CD8-positive, alpha-beta T cell (primary cell): ENCODE measurements at regions of chr3 and their contacts with region 1.

Region 1: DNA sequence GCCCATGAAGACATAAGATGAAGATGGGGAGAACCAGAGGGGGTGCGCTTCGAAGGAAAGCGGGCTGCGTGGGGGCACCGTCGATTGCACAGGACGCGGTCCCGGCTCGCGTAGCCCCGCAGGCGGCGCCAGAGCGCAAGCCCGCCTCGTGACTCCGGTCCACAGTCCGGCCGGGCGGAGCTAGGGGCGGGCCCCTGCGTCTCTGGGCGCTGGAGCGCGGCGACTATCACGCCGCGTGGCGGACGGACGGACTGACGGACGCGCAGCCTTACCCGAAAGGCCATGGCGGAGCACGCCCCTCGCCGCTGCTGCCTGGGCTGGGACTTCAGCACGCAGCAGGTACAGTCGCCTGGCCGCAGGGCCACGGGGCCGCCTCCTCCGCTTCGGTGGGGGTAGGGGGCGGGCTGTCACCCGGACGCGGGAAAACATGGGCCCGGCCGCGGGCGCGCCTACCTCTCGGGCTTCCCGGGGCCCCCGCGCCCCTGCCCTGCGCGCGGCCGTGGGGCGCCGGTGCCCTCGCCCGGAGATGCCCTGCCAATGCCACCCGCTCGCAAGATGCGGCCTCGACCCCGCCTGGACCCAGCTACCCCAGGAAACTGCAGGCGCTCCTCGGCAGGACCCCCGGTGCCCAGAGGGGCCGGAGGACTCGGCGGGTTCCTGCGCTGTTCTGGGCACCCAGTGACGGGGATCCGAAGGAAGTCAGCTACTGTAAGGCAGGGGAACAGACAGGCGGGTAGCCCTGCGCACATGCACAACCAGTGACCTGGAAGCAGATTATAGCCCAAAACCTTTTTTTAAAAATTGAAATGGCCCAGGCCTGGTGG is at the start of gene XYLB:
- DNase-seq: peak; percentile 43 to 87 (median 71)
- ATAC-seq: peak; percentile 95
- H3K4me3 ChIP-seq: peak within 1 kb of the TSS; percentile 51 to 83
- H3K4me3 Mint-ChIP-seq: peak within 1 kb of the TSS; percentile 85
- H3K27ac ChIP-seq: peak within 1 kb of the TSS in 1 of 2 experiments; percentile 33
- H3K27ac Mint-ChIP-seq: no peak within 1 kb of the TSS
- H3K4me1 ChIP-seq: no peaks in the 10 kb centered on the region
- H3K4me1 Mint-ChIP-seq: peaks cover 3% of the 10 kb centered on the region
- H3K27me3 ChIP-seq: no peaks in the 10 kb centered on the region
- H3K27me3 Mint-ChIP-seq: peaks cover 3% of the 10 kb centered on the region
- CTCF ChIP-seq: peak; percentile 78
- total RNA-seq, gene XYLB: 0.47 to 0.52 TPM

Region 2: GRCh38 chr3:38117748-38118420 is 228.9 kb before region 1 on chr3:
- CTCF ChIA-PET with region 1: interaction called, 24 read pairs
- POLR2A ChIA-PET with region 1: no interaction called
- intact Hi-C with region 1: loop called (anchors 2 kb)
- DNase-seq: peak; percentile 60 to 81 (median 75)
- ATAC-seq: peak; percentile 99
- H3K4me3 ChIP-seq: no peak overlapping the region
- H3K4me3 Mint-ChIP-seq: no peak overlapping the region
- H3K27ac ChIP-seq: no peak overlapping the region
- H3K27ac Mint-ChIP-seq: no peak overlapping the region
- H3K4me1 ChIP-seq: no peaks in the 10 kb centered on the region
- H3K4me1 Mint-ChIP-seq: peaks cover 6% of the 10 kb centered on the region
- H3K27me3 ChIP-seq: no peaks in the 10 kb centered on the region
- H3K27me3 Mint-ChIP-seq: no peaks in the 10 kb centered on the region
- CTCF ChIP-seq: peak; percentile 73

Region 3: DNA sequence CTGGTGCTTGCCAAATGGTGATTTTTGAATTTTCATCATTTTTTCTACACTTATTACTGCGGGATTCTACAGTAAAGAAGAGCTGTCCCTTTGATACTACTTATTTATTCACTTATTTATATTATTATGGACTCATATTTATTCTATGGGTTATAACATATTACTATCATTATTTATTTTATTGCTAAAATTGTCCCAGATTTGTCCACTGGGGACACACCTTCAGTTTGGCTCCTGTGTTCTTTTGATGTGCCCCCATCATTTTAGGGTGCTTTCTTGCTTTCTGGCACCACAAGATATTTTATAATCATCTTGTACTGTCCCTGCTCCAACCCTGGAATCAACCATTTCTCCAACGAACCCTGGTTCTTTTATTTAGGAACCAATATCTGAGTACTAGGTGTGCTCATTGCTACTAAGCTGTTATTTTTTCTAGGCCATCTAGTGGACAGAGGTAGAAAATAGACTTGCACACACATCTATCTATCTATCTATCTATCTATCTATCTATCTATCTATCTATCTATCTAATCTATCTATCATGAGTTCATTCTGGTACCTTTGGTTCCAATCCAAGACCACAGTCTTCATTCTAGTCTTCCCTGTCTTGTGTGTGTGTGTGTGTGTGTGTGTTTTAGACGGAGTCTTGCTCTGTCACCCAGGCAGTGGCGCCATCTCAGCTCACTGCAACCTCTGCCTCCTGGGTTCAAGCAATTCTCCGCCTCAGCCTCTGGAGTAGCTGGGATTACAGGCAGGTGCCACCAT is 48.7 kb before region 1 on chr3:
- CTCF ChIA-PET with region 1: no interaction called
- POLR2A ChIA-PET with region 1: no interaction called
- intact Hi-C with region 1: no loop called
- DNase-seq: peak in 1 of 9 experiments; percentile 23
- ATAC-seq: no peak
- H3K4me3 ChIP-seq: no peak overlapping the region
- H3K4me3 Mint-ChIP-seq: no peak overlapping the region
- H3K27ac ChIP-seq: no peak overlapping the region
- H3K27ac Mint-ChIP-seq: no peak overlapping the region
- H3K4me1 ChIP-seq: no peaks in the 10 kb centered on the region
- H3K4me1 Mint-ChIP-seq: no peaks in the 10 kb centered on the region
- H3K27me3 ChIP-seq: no peaks in the 10 kb centered on the region
- H3K27me3 Mint-ChIP-seq: no peaks in the 10 kb centered on the region
- CTCF ChIP-seq: peak; percentile 48

Region 4: DNA sequence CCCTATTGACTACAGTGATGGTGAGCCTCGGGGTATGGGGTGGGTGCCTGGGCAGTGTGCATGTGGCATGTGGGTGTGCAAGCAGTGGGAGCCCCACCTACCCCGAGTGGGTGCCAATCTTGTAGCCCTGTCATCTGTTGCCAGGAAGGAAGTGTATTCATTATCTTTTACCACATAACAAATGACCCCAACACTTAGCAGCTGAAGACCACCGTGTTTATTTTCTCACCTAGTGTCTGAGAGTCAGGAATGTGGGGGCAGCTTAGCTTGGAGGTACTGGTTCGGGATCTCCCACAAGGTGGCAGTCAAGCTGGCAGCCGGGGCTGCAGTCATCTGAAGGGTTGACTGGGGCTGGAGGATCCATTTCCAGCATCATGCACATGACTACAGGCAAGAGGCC is 21.4 kb after region 1 on chr3:
- CTCF ChIA-PET with region 1: interaction called, 10 read pairs
- POLR2A ChIA-PET with region 1: no interaction called
- intact Hi-C with region 1: no loop called
- DNase-seq: no peak
- ATAC-seq: no peak
- H3K4me3 ChIP-seq: no peak overlapping the region
- H3K4me3 Mint-ChIP-seq: no peak overlapping the region
- H3K27ac ChIP-seq: no peak overlapping the region
- H3K27ac Mint-ChIP-seq: no peak overlapping the region
- H3K4me1 ChIP-seq: peaks cover 5% of the 10 kb centered on the region
- H3K4me1 Mint-ChIP-seq: peaks cover 13% of the 10 kb centered on the region
- H3K27me3 ChIP-seq: no peaks in the 10 kb centered on the region
- H3K27me3 Mint-ChIP-seq: no peaks in the 10 kb centered on the region
- CTCF ChIP-seq: no peak

Region 5: DNA sequence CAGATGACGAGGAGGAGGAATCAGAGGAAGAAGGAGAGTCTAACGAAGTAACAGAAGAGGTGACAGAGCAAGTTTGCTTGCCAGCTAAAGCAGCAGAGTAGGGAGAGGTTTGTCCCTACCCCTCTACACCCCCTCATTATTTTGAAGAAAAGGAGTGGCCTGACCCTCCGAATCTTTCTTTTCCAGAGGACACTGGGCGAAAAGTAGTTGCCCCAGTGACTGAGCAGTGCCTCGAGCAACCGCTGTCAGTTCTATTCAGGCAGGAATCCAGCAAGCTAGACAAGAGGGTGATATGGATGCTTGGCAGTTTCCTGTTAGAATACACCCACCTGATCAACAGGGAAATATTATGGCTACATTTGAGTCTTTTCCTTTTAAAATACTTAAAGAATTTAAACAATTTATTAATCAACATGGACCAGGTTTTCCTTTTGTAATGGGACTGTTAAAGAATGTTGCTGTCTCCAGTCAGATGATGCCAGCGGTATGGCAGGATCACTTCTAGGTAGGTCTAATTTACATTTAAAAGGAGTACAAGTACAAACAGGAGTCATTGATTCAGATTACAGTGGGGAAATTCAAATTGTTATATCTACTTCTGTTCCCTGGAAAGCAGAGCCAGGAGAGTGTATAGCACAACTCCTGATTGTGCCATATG is 75.0 kb after region 1 on chr3:
- CTCF ChIA-PET with region 1: interaction called, 13 read pairs
- POLR2A ChIA-PET with region 1: no interaction called
- intact Hi-C with region 1: no loop called
- DNase-seq: no peak
- ATAC-seq: no peak
- H3K4me3 ChIP-seq: no peak overlapping the region
- H3K4me3 Mint-ChIP-seq: peak overlapping the region; percentile 67
- H3K27ac ChIP-seq: no peak overlapping the region
- H3K27ac Mint-ChIP-seq: peak overlapping the region; percentile 86
- H3K4me1 ChIP-seq: peaks cover 22% of the 10 kb centered on the region
- H3K4me1 Mint-ChIP-seq: peaks cover 48% of the 10 kb centered on the region
- H3K27me3 ChIP-seq: no peaks in the 10 kb centered on the region
- H3K27me3 Mint-ChIP-seq: no peaks in the 10 kb centered on the region
- CTCF ChIP-seq: no peak

Region 6: DNA sequence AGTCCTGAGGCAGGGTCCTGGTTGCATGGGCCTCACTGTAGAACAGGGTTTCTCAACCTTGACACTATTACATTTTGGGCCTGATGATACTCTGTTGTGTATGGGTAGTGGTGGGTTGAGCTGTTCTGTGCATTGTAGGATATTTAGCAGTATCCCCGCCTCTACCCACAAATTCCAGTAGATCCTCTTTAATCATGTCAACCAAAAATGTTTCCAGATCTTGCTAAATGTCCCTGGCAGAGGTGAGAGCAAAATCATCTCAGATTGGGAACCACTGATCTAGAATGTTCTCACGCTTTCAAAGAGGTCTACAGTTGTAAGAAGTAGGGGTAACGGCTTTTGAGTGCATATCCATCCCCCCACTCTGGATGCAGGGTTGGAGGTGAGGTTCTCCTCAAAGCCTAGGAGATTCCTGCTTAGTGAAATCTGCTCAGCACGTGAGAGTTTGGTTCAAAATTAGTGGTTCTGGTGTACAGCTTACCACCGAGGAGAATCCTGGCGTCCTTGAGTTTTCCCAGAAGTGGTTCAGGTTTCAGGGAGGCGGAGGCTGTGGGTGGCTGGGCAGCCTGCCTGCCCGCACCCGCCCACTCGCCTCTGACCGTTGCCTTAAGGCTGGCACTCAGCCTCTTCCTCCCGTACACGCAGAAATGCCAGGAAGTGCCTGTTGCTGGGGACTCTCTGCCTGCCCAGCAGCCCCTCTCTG is 112.1 kb after region 1 on chr3:
- CTCF ChIA-PET with region 1: interaction called, 20 read pairs
- POLR2A ChIA-PET with region 1: interaction called, 11 read pairs
- intact Hi-C with region 1: no loop called
- DNase-seq: no peak
- ATAC-seq: no peak
- H3K4me3 ChIP-seq: no peak overlapping the region
- H3K4me3 Mint-ChIP-seq: no peak overlapping the region
- H3K27ac ChIP-seq: no peak overlapping the region
- H3K27ac Mint-ChIP-seq: no peak overlapping the region
- H3K4me1 ChIP-seq: peaks cover 12% of the 10 kb centered on the region
- H3K4me1 Mint-ChIP-seq: peaks cover 33% of the 10 kb centered on the region
- H3K27me3 ChIP-seq: peaks cover 0 to 3% of the 10 kb centered on the region in 2 experiments
- H3K27me3 Mint-ChIP-seq: no peaks in the 10 kb centered on the region
- CTCF ChIP-seq: no peak

Region 7: DNA sequence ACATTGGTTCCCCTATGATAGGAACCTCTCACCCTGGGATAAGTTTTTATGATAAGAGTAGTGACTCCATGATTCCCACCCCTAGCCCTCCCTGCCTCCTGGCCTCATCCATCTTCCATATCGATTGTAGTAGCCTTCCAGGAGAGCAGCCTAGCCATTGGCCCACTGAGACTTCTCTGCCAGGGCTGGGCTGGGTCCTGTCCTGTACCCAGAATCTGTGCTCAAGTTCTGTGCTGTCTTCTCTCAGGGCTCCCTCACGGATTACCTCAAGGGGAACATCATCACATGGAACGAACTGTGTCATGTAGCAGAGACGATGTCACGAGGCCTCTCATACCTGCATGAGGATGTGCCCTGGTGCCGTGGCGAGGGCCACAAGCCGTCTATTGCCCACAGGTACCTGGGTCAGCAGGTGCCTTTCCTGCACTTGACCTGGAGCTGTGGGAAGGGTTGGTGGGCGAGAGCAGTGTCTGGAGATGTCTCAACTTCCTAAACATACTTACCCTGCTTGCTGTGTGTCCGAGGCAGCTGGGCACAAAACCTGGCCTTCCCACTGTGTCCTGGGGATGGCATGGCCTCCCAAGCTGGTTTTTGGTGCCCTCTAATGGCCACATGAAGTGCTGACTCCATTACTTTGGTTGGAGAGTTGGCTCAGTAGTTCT is 132.8 kb after region 1 on chr3:
- CTCF ChIA-PET with region 1: interaction called, 168 read pairs
- POLR2A ChIA-PET with region 1: interaction called, 4 read pairs
- intact Hi-C with region 1: loop called (anchors 1 to 2 kb)
- DNase-seq: peak in 7 of 9 experiments; percentile 18 to 72 (median 48)
- ATAC-seq: peak; percentile 55
- H3K4me3 ChIP-seq: no peak overlapping the region
- H3K4me3 Mint-ChIP-seq: no peak overlapping the region
- H3K27ac ChIP-seq: no peak overlapping the region
- H3K27ac Mint-ChIP-seq: no peak overlapping the region
- H3K4me1 ChIP-seq: no peaks in the 10 kb centered on the region
- H3K4me1 Mint-ChIP-seq: peaks cover 2% of the 10 kb centered on the region
- H3K27me3 ChIP-seq: no peaks in the 10 kb centered on the region
- H3K27me3 Mint-ChIP-seq: no peaks in the 10 kb centered on the region
- CTCF ChIP-seq: peak; percentile 75

Region 8: DNA sequence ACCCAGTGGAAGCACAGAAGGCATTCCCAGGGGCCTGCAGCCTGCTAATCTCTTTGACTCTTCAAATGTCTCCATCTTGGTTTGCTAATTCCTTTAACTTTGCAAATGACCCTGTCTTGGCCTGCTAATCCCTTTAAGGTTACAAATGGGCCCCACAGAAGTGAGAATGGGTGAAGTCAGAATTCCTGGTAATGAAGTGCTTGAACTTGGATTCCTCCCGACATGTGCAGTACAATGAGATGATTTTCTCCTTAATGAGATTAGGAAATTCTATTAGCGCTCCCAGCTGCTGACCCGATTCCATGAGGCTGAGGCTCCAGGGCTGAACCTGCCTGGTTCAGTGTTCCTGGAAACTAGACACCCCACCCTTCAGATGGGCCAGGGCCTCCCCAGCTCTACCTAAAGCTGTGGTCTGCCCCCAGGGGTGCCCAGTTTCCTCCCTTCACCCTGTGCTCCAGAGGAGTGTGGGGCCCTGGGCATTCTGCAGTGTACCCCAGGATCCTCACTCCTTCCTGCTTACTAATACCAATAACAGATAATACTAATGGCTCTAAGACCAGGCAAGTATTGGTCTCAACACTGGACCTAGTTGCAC is 255.3 kb after region 1 on chr3:
- CTCF ChIA-PET with region 1: no interaction called
- POLR2A ChIA-PET with region 1: no interaction called
- intact Hi-C with region 1: no loop called
- DNase-seq: no peak
- ATAC-seq: no peak
- H3K4me3 ChIP-seq: no peak overlapping the region
- H3K4me3 Mint-ChIP-seq: no peak overlapping the region
- H3K27ac ChIP-seq: no peak overlapping the region
- H3K27ac Mint-ChIP-seq: no peak overlapping the region
- H3K4me1 ChIP-seq: no peaks in the 10 kb centered on the region
- H3K4me1 Mint-ChIP-seq: no peaks in the 10 kb centered on the region
- H3K27me3 ChIP-seq: no peaks in the 10 kb centered on the region
- H3K27me3 Mint-ChIP-seq: peaks cover 17% of the 10 kb centered on the region
- CTCF ChIP-seq: no peak

Region 9: GRCh38 chr3:38651154-38651789 is 304.5 kb after region 1 on chr3:
- CTCF ChIA-PET with region 1: interaction called, 3 read pairs
- POLR2A ChIA-PET with region 1: no interaction called
- intact Hi-C with region 1: loop called (anchors 2 to 10 kb)
- DNase-seq: peak; percentile 49 to 82 (median 67)
- ATAC-seq: peak; percentile 74
- H3K4me3 ChIP-seq: no peak overlapping the region
- H3K4me3 Mint-ChIP-seq: peak overlapping the region; percentile 52
- H3K27ac ChIP-seq: no peak overlapping the region
- H3K27ac Mint-ChIP-seq: no peak overlapping the region
- H3K4me1 ChIP-seq: peaks cover 21% of the 10 kb centered on the region
- H3K4me1 Mint-ChIP-seq: peaks cover 13% of the 10 kb centered on the region
- H3K27me3 ChIP-seq: peaks cover 7 to 17% of the 10 kb centered on the region in 2 experiments
- H3K27me3 Mint-ChIP-seq: peaks cover 9% of the 10 kb centered on the region
- CTCF ChIP-seq: peak; percentile 96